ENCODE measurements at regions of chr11 and their contacts with region 1.

Region 1: GRCh38 chr11:6682936-6683861 is at the start of gene MRPL17:
- DNase-seq: peak; percentile 100
- H3K4me3 Mint-ChIP-seq: peak within 1 kb of the TSS; percentile 96
- H3K27ac Mint-ChIP-seq: peak within 1 kb of the TSS; percentile 95
- H3K4me1 Mint-ChIP-seq: peaks cover 31% of the 10 kb centered on the region
- H3K27me3 Mint-ChIP-seq: no peaks in the 10 kb centered on the region
- total RNA-seq, gene MRPL17: 54.1 to 56.3 TPM

Region 2: DNA sequence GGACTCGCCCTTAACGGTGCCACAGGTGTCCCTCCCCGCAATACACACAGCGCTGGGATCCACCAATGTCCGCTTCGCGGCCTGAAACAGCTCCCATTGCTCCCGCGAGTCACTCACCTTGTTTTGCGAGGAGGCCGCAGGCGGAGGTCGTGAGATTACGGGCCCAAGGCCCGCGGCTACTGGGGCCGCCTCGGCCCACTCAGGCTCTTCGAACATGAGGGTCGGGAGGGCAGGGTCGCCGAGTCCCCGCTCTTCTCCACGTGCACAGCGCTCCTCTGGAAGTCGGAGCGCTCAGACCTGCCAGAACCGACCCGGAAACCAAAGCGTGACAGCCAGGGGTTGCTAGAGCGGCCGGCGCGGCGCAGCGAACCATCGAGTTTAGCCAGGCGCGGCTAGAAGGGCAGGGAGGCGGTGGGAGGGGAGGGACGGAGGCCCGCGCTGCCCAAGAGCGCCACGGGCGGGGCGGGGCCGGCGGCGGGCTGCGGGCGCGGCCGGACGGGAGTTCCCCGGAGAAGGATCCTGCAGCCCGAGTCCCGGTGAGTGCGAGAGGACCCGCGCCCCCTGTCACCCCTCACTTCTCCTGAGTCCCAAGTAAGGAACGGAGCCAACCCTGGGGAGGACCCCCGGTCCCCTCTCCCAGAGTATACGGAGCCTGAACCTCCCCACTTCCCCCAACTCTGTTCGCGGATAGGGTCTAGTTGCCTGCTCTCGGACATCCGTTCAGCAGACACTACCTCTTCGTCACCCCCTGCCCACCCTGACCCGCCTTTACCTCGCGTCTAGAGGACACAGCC is 79.7 kb before region 1 on chr11 and contains the starts of genes ILK and RRP8:
- CTCF ChIA-PET with region 1: interaction called, 64 read pairs
- POLR2A ChIA-PET with region 1: interaction called, 36 read pairs
- DNase-seq: peak; percentile 91
- H3K4me3 Mint-ChIP-seq: no peak within 1 kb of the TSS
- H3K27ac Mint-ChIP-seq: no peak within 1 kb of the TSS
- H3K4me1 Mint-ChIP-seq: peaks cover 13% of the 10 kb centered on the region
- H3K27me3 Mint-ChIP-seq: no peaks in the 10 kb centered on the region
- total RNA-seq, gene ILK: 135 to 138 TPM
- total RNA-seq, gene RRP8: 21.8 to 24.4 TPM

Region 3: GRCh38 chr11:6619004-6619745 is 64.0 kb before region 1 on chr11 and contains the start of gene TPP1:
- CTCF ChIA-PET with region 1: interaction called, 59 read pairs
- POLR2A ChIA-PET with region 1: interaction called, 49 read pairs
- DNase-seq: peak; percentile 92
- H3K4me3 Mint-ChIP-seq: no peak within 1 kb of the TSS
- H3K27ac Mint-ChIP-seq: no peak within 1 kb of the TSS
- H3K4me1 Mint-ChIP-seq: peaks cover 6% of the 10 kb centered on the region
- H3K27me3 Mint-ChIP-seq: no peaks in the 10 kb centered on the region
- total RNA-seq, gene TPP1: 130 to 131 TPM

Region 4: DNA sequence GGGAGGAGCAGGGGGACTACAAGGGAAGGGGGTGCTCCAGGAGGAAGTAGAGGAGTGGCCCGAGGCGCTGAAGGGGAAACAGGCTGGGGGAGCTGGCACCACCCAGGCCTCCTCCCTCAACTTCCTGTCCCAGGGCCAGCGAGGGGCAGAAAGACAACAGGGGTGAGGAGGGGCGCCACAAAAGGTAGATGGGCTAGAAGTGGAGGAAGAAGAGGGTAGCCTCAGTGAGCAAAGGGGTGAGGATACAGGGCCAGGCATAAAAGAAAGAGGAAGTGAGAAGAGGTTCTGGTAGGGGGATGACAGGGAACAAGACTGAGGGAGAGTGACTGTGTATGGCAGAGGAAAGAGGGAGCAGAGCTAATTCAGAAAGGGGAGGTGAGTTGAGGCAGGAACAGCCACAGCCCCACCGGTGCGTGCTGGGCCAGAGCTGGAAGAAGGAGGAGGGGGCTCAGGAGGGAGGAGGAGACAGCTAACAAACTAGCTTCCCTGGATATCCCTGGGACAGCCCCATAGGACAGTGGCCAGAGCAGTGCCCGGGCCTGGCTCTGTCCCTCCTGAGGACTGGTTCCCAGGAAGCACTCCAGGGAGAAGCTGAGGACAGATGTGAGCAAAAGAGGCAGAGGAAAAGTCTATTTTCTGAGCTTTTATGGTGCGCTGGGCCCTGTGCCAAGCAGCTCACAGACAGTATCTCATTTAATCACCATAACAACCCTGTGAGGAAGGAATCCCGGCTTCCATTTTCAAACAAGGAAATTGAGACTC is 36.1 kb before region 1 on chr11:
- CTCF ChIA-PET with region 1: interaction called, 10 read pairs
- POLR2A ChIA-PET with region 1: interaction called, 3 read pairs
- DNase-seq: peak; percentile 36
- H3K4me3 Mint-ChIP-seq: no peak overlapping the region
- H3K27ac Mint-ChIP-seq: no peak overlapping the region
- H3K4me1 Mint-ChIP-seq: no peaks in the 10 kb centered on the region
- H3K27me3 Mint-ChIP-seq: no peaks in the 10 kb centered on the region

Region 5: GRCh38 chr11:6746086-6746618 is 63.0 kb after region 1 on chr11:
- CTCF ChIA-PET with region 1: interaction called, 14 read pairs
- POLR2A ChIA-PET with region 1: interaction called, 6 read pairs
- DNase-seq: peak; percentile 55
- H3K4me3 Mint-ChIP-seq: no peak overlapping the region
- H3K27ac Mint-ChIP-seq: no peak overlapping the region
- H3K4me1 Mint-ChIP-seq: peaks cover 26% of the 10 kb centered on the region
- H3K27me3 Mint-ChIP-seq: no peaks in the 10 kb centered on the region

Region 6: GRCh38 chr11:6833356-6833755 is 150.2 kb after region 1 on chr11:
- CTCF ChIA-PET with region 1: no interaction called
- POLR2A ChIA-PET with region 1: no interaction called
- DNase-seq: no peak
- H3K4me3 Mint-ChIP-seq: no peak overlapping the region
- H3K27ac Mint-ChIP-seq: no peak overlapping the region
- H3K4me1 Mint-ChIP-seq: no peaks in the 10 kb centered on the region
- H3K27me3 Mint-ChIP-seq: peaks cover 4% of the 10 kb centered on the region